ENCODE measurements at regions of chr7 and their contacts with region 1.

Region 1: DNA sequence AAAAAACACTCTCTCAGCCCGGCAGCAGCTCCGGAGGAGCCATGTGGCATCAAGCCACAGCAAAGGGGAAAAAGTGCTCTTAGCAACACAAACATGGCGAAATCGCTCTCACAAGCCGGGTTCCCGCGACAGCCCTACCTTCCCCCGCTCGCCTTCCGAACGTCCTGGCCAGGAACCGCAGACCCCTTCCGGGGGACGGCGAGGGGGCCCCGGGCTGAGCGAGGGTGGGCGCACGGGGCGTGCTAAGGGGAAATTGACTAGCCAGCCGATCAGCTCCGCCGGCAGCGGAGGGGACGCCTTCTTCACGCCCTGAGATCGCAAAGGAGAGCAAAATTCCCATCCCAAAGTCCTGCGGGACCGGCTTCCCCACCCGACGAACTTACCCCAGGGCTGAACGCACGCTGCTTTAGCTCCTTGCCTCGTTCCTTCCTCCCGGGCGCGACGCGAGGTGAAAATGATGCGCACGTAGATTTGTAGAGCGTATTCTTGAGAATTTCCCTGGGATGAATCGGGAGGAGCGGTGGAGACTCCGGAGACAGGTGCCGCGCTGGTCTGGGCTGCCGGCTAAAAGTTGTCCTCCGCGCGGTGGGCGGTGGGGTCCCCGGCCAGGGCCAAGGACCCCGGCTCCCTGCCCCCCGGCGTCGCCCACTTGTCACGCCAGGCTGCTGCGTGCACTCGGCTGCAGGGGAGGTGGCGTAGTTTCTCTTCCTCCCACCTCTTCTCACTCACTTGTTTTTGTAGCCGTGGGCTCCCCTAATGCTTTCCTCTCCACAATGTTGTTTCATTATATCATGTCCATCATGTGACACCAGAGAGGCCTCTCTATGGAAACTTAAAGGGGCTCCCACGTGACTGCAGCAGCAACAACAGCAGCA is 220.1 kb upstream of the MKLN1 start:
- DNase-seq: peak; percentile 82
- H3K4me3 Mint-ChIP-seq: peak overlapping the region; percentile 98
- H3K27ac Mint-ChIP-seq: peak overlapping the region; percentile 97
- H3K4me1 Mint-ChIP-seq: peaks cover 57% of the 10 kb centered on the region
- H3K27me3 Mint-ChIP-seq: peaks cover 2% of the 10 kb centered on the region

Region 2: GRCh38 chr7:130896898-130897514 is 210.6 kb before region 1 on chr7:
- CTCF ChIA-PET with region 1: interaction called, 7 read pairs
- intact Hi-C with region 1: loop called (anchors 5 kb)
- DNase-seq: peak; percentile 85
- H3K4me3 Mint-ChIP-seq: no peak overlapping the region
- H3K27ac Mint-ChIP-seq: peak overlapping the region; percentile 85
- H3K4me1 Mint-ChIP-seq: peaks cover 88% of the 10 kb centered on the region
- H3K27me3 Mint-ChIP-seq: no peaks in the 10 kb centered on the region

Region 3: GRCh38 chr7:131007394-131008330 is 99.9 kb before region 1 on chr7:
- CTCF ChIA-PET with region 1: interaction called, 3 read pairs
- intact Hi-C with region 1: loop called (anchors 1 kb)
- DNase-seq: peak; percentile 80
- H3K4me3 Mint-ChIP-seq: peak overlapping the region; percentile 52
- H3K27ac Mint-ChIP-seq: peak overlapping the region; percentile 91
- H3K4me1 Mint-ChIP-seq: peaks cover 86% of the 10 kb centered on the region
- H3K27me3 Mint-ChIP-seq: no peaks in the 10 kb centered on the region

Region 4: DNA sequence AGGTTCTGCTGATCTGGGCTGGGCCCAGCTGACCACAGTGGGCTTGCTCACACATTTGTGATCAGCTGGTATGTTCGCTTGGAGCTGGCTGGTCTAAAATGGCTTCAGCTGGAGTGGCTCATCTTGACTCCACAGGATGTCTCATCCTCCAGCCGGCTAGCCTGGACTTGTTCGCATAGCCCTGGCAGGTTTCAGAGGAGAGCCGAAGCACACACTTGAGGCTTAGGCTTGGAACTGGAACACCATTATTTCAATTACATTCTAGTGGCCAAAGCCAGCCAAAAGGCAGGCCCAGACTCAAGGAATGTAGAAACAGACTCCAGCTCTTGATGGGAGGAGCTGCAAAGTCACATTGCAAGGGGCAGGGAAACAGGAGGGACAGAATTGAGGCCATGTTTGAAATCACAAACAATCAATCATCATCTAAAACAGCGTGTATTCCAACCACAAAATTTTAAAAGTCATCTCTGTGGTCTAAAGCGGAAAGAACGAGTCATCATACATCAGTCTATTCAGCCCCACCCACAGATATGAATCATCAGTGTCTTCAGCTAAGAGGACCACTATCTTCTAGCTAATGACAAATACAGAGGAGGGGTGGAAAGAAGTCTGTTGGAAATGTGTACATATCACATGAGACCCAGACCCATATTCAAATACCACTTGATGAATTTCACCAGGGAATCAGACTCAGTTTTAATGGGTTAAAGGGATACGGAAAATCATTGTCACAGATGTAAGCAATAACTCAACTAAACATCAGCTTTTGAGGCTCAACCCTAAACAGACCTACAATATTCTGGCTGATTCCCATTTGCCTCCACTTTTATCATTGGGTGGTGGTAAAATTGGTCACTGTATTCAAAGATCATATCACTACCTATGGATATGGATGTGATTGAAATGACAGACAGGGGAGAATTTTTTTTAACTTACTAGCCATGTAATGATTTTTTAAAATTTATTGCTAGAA is 81.1 kb after region 1 on chr7:
- CTCF ChIA-PET with region 1: interaction called, 4 read pairs
- intact Hi-C with region 1: loop called (anchors 1 kb)
- DNase-seq: peak; percentile 70
- H3K4me3 Mint-ChIP-seq: no peak overlapping the region
- H3K27ac Mint-ChIP-seq: peak overlapping the region; percentile 89
- H3K4me1 Mint-ChIP-seq: peaks cover 51% of the 10 kb centered on the region
- H3K27me3 Mint-ChIP-seq: no peaks in the 10 kb centered on the region

Region 5: DNA sequence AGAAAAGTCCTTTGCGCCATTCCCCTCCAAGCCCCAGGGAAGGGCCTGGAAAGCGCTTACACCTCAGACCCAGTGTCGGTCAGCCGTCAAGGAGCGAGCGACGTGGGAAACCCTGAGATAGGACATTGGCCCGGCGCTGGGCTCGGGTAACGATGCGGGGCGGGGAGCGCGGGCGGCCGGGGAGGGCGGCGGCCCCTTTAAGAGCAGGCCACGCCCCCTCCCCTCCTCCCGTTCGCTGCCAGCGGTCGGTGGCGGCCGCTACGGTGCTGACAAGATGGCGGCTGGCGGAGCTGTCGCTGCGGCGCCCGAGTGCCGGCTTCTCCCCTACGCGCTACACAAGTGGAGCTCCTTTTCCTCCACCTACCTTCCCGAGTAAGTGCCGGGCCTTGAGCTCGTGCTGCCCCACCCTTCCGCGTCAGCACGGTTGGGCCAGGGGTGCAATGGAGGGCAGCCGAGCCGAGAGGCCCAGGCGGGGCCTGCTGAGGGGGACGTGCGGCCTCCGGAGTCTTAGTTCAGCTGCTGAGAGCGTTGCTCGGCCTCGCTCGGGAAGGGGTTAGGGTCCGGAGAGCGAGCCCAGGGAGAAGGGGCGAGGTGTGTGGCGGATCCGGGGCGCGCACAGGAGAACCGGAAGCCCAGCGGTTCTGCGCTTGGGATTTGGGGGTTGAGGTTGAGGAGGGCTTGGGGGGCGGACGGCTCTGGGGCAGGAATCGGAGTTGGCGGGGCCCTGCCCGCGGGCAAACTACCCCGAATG is 220.2 kb after region 1 on chr7 and contains the start of gene MKLN1:
- CTCF ChIA-PET with region 1: interaction called, 3 read pairs
- intact Hi-C with region 1: loop called (anchors 1 kb)
- DNase-seq: peak; percentile 90
- H3K4me3 Mint-ChIP-seq: peak within 1 kb of the TSS; percentile 98
- H3K27ac Mint-ChIP-seq: peak within 1 kb of the TSS; percentile 96
- H3K4me1 Mint-ChIP-seq: peaks cover 54% of the 10 kb centered on the region
- H3K27me3 Mint-ChIP-seq: no peaks in the 10 kb centered on the region
- total RNA-seq, gene MKLN1: 29.8 to 34.9 TPM

Region 6: GRCh38 chr7:131346885-131347592 is 239.5 kb after region 1 on chr7:
- CTCF ChIA-PET with region 1: no interaction called
- intact Hi-C with region 1: no loop called
- DNase-seq: no peak
- H3K4me3 Mint-ChIP-seq: no peak overlapping the region
- H3K27ac Mint-ChIP-seq: no peak overlapping the region
- H3K4me1 Mint-ChIP-seq: peaks cover 47% of the 10 kb centered on the region
- H3K27me3 Mint-ChIP-seq: no peaks in the 10 kb centered on the region

Region 7: GRCh38 chr7:131501422-131501821 is 393.8 kb after region 1 on chr7:
- CTCF ChIA-PET with region 1: no interaction called
- intact Hi-C with region 1: loop called (anchors 2 kb)
- DNase-seq: peak; percentile 83
- H3K4me3 Mint-ChIP-seq: no peak overlapping the region
- H3K27ac Mint-ChIP-seq: peak overlapping the region; percentile 53
- H3K4me1 Mint-ChIP-seq: peaks cover 35% of the 10 kb centered on the region
- H3K27me3 Mint-ChIP-seq: no peaks in the 10 kb centered on the region